Esophagus muscularis mucosa (tissue), 4 donors: ENCODE measurements at regions of chr9 and their contacts with region 1.

Region 1: GRCh38 chr9:96136992-96137670 is 164.8 kb downstream of the HSD17B3 start:
- DNase-seq: no peak
- H3K4me3 ChIP-seq: peak overlapping the region in 3 of 4 donors; percentile 25 to 47 (median 33)
- H3K27ac ChIP-seq: peak overlapping the region; percentile 79 to 86 (median 82)
- H3K4me1 ChIP-seq: peaks cover 11 to 83% (median 75%) of the 10 kb centered on the region in 4 donors
- H3K27me3 ChIP-seq: no peaks in the 10 kb centered on the region
- CTCF ChIP-seq: no peak
- EP300 ChIP-seq: no peak
- POLR2A ChIP-seq: no peak

Region 2: GRCh38 chr9:96080364-96080763 is 56.8 kb before region 1 on chr9:
- intact Hi-C with region 1: loop called (anchors 5 kb)
- DNase-seq: no peak
- H3K4me3 ChIP-seq: no peak overlapping the region
- H3K27ac ChIP-seq: peak overlapping the region; percentile 67 to 75 (median 71)
- H3K4me1 ChIP-seq: peaks cover 0 to 32% (median 28%) of the 10 kb centered on the region in 4 donors
- H3K27me3 ChIP-seq: no peaks in the 10 kb centered on the region
- CTCF ChIP-seq: no peak
- EP300 ChIP-seq: no peak
- POLR2A ChIP-seq: no peak